ENCODE measurements at regions of chr19 and their contacts with region 1.

Region 1: DNA sequence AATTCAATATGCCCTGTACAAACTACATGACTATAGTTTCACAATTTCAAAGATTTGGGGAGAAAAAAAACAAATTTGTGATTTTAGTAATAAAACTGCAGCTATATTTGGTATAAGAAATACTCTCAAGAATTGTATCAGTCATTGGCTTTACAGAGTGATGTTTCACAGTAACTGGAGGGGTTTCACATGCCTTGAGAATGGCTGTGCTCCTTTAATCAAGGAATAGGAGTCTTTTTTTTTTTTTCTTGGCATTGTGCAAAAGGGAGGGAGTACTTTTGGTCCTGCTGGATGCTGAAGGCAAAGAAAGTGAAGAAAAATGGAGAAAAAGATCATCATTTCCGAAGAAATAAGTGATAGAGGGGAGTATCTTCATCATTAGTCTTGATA is 6.8 kb downstream of the ZNF507 start:
- DNase-seq: no peak
- H3K4me3 ChIP-seq: no peak overlapping the region
- H3K27ac ChIP-seq: no peak overlapping the region
- H3K4me1 ChIP-seq: peaks cover 21% of the 10 kb centered on the region
- H3K27me3 ChIP-seq: no peaks in the 10 kb centered on the region
- CTCF ChIP-seq: no peak
- POLR2A ChIP-seq: no peak

Region 2: GRCh38 chr19:32373585-32374295 is 21.5 kb after region 1 on chr19:
- CTCF ChIA-PET with region 1: interaction called, 5 read pairs
- POLR2A ChIA-PET with region 1: no interaction called
- dilution Hi-C with region 1: no loop called
- intact Hi-C with region 1: loop called (anchors 1 kb)
- DNase-seq: peak; percentile 96
- H3K4me3 ChIP-seq: peak overlapping the region in 1 of 3 experiments; percentile 36
- H3K27ac ChIP-seq: peak overlapping the region; percentile 89
- H3K4me1 ChIP-seq: peaks cover 22% of the 10 kb centered on the region
- H3K27me3 ChIP-seq: no peaks in the 10 kb centered on the region
- CTCF ChIP-seq: no peak
- POLR2A ChIP-seq: no peak

Measured in endothelial cell of umbilical vein (primary cell).